Calu3 (cell line): ENCODE measurements at regions of chr5 and their contacts with region 1.

Region 1: DNA sequence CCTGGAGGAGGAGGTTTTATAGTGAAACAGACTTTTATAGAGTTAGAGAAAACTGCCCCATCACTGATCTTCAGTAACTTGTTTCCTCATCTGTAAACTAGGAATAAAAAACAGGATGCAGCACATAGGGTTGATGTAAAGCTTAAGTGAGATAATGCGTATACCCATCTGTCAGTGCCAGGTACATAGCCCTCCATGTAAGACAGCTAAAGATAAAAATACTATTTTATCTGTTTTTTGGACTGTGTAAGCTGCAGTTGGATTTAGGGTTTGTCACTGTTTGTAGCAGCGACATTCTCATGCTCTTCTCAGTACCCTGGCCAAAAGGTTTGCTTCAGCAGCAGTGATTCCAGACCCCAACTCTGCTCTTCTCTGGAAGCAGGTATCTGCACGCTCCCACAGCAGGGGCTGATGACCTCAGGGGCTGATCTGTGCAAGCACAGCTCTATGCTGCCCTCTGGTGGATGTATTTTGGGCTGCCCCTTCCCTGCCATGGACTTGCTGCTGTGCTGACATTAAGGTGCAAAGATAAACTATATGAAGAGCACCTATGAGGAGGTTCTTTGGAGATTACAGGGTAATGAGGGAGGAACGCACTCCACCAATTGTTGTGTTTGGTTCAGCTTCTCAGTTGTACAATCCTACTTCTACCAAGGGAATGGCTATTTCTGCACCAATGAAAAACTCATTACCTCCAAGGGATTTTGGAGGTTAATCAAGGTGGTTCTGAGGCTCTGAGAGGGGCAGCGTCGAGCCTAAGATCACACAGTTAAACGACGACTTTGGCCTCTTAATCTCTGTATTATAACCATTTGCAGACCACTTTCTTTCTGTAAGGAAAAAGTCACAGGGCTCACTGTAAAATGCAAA is 13.1 kb downstream of the HMHB1 start:
- DNase-seq: peak; percentile 90
- H3K4me3 Mint-ChIP-seq: no peak overlapping the region
- H3K27ac Mint-ChIP-seq: no peak overlapping the region
- H3K4me1 Mint-ChIP-seq: no peaks in the 10 kb centered on the region
- H3K27me3 Mint-ChIP-seq: no peaks in the 10 kb centered on the region
- CTCF ChIP-seq: peak; percentile 99

Region 2: DNA sequence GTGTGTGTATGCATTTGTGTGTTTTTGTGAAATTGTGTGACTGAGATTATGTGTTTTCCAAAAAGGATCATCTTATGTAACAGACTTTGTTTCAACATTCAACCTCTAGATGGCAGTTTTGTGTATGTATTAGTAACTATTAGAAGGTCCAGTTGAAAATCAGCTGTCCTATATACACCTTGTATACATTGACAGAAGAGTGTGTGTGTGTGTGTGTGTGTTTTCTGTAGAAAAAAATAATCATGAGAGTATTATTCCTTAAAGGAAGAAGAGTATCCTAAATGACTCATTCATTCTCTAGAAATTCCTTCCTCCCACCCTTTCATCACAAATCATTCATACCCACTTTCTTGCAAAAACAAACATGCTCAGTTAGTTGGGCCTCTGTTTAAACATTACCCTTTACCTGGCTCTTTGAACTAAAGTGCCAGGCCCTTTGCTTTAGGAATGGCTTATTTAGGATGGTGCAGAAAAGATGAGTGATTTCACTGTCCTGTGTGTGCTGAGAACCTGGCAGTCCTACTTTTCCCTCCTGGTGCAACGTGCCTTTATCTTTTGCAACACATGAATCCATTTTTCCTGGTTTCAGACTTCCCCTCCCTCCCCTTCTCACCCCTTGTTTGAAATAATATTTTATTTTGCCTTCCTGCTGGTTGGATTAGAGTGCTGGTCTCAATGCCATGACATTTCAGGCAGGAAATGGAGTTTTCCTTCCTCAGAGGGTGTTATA is 902.7 kb before region 1 on chr5:
- CTCF ChIA-PET with region 1: interaction called, 3 read pairs
- intact Hi-C with region 1: loop called (anchors 2 kb)
- DNase-seq: no peak
- H3K4me3 Mint-ChIP-seq: no peak overlapping the region
- H3K27ac Mint-ChIP-seq: no peak overlapping the region
- H3K4me1 Mint-ChIP-seq: peaks cover 63% of the 10 kb centered on the region
- H3K27me3 Mint-ChIP-seq: no peaks in the 10 kb centered on the region
- CTCF ChIP-seq: peak; percentile 1

Region 3: GRCh38 chr5:143403593-143404415 is 421.3 kb before region 1 on chr5 and contains the start of gene NR3C1:
- CTCF ChIA-PET with region 1: interaction called, 9 read pairs
- intact Hi-C with region 1: loop called (anchors 2 kb)
- DNase-seq: peak; percentile 89
- H3K4me3 Mint-ChIP-seq: peak within 1 kb of the TSS; percentile 97
- H3K27ac Mint-ChIP-seq: peak within 1 kb of the TSS; percentile 95
- H3K4me1 Mint-ChIP-seq: peaks cover 35% of the 10 kb centered on the region
- H3K27me3 Mint-ChIP-seq: no peaks in the 10 kb centered on the region
- CTCF ChIP-seq: peak; percentile 77
- total RNA-seq, gene NR3C1: 63.1 and 72.4 TPM in 2 replicates

Region 4: DNA sequence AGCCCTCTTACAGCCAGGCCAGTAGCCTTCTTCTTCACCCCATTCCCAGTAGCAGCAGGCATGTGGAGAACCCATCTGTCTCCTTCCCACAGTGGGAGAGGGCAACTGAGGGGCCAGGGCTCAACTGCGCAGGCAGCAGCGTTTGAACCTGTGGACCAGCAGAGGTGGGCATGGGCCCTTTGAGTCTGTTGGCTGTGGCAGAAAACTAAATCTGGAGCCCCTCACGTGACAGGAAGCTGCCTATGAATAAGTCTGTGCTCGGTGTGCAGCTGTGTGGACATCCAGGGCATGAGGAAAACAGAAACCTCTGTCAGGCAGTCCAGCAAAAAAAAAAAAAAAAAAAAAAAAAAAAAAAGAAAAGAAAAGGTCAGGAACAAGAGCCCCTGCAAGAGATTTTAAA is 232.4 kb before region 1 on chr5:
- CTCF ChIA-PET with region 1: no interaction called
- intact Hi-C with region 1: loop called (anchors 10 kb)
- DNase-seq: no peak
- H3K4me3 Mint-ChIP-seq: no peak overlapping the region
- H3K27ac Mint-ChIP-seq: no peak overlapping the region
- H3K4me1 Mint-ChIP-seq: peaks cover 59% of the 10 kb centered on the region
- H3K27me3 Mint-ChIP-seq: no peaks in the 10 kb centered on the region
- CTCF ChIP-seq: no peak

Region 5: GRCh38 chr5:143758750-143759149 is 66.3 kb before region 1 on chr5:
- CTCF ChIA-PET with region 1: no interaction called
- intact Hi-C with region 1: no loop called
- DNase-seq: no peak
- H3K4me3 Mint-ChIP-seq: no peak overlapping the region
- H3K27ac Mint-ChIP-seq: no peak overlapping the region
- H3K4me1 Mint-ChIP-seq: no peaks in the 10 kb centered on the region
- H3K27me3 Mint-ChIP-seq: no peaks in the 10 kb centered on the region
- CTCF ChIP-seq: no peak

Region 6: GRCh38 chr5:143923634-143924255 is 98.7 kb after region 1 on chr5:
- CTCF ChIA-PET with region 1: no interaction called
- intact Hi-C with region 1: no loop called
- DNase-seq: no peak
- H3K4me3 Mint-ChIP-seq: no peak overlapping the region
- H3K27ac Mint-ChIP-seq: peak overlapping the region; percentile 61
- H3K4me1 Mint-ChIP-seq: peaks cover 39% of the 10 kb centered on the region
- H3K27me3 Mint-ChIP-seq: no peaks in the 10 kb centered on the region
- CTCF ChIP-seq: no peak

Region 7: GRCh38 chr5:143968011-143968878 is 143.2 kb after region 1 on chr5:
- CTCF ChIA-PET with region 1: interaction called, 4 read pairs
- intact Hi-C with region 1: loop called (anchors 2 kb)
- DNase-seq: peak; percentile 34
- H3K4me3 Mint-ChIP-seq: no peak overlapping the region
- H3K27ac Mint-ChIP-seq: no peak overlapping the region
- H3K4me1 Mint-ChIP-seq: no peaks in the 10 kb centered on the region
- H3K27me3 Mint-ChIP-seq: peaks cover 13% of the 10 kb centered on the region
- CTCF ChIP-seq: peak; percentile 64

Region 8: DNA sequence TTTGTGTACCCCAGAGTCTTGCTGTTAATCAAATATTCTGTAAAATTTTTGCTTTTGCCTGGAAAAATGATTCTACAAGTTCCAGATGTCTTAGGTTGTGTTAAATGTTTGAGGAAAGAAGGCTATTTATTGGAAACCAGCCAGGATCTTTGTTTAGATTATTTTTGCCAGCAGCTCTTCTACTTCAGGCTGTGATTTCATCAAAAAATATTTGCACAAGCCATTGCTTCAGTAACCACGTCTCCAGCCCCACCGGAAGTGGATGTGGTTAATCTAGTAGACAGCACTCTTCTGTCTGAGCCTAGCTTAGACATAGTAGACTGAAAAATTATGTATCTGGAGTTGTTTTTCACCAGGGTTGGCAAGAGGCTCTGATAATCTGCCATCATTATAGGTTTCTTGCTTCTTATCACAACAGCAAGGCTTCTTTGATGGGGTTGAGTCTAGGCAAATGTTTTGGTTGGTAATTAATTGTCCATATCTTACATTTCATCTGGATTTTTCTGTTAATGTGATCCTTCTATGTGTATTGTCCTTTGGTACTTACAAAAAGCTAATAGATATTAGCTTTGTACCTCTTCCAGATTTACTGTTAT is 362.7 kb after region 1 on chr5:
- CTCF ChIA-PET with region 1: no interaction called
- intact Hi-C with region 1: loop called (anchors 5 kb)
- DNase-seq: peak; percentile 63
- H3K4me3 Mint-ChIP-seq: no peak overlapping the region
- H3K27ac Mint-ChIP-seq: peak overlapping the region; percentile 29
- H3K4me1 Mint-ChIP-seq: peaks cover under 1% of the 10 kb centered on the region
- H3K27me3 Mint-ChIP-seq: no peaks in the 10 kb centered on the region
- CTCF ChIP-seq: no peak